OCI-LY7 (cell line): ENCODE measurements at regions of chr4 and their contacts with region 1.

Region 1: DNA sequence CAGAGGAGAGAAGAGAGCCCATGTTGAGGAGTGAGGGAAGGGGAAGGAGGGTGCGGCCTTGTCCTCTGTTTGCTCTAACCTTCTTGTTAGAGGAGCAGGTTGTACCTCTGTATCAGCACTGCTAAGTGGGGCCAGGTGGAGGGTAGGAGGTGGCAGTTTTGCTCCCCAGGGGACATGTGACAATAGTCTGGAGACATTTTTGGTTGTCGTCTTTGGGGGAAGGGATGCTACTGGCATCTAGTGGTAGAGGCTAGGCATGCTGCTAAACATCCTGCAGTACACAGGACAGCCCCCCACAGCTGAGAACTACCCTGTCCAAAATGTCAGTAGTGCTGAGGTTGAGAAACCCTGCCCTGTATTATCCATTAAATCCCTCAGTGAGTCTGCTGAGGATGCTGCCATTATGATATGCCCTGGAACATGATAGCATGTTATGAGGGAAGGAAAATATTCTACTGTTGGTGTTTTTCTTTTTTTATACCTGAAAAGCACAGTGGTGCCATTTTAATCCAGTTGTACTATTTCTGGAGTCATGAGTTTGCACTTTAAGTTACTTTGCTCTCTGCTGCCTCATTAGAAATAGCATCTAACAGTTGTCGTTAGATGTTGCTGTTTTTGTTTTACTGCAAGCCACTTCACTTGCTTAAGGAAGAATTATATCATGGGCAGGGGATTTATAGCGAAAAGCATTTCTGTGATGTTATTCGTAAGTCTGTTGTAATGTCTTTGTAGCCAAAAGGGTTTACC is 90.6 kb downstream of the LRP2BP start:
- DNase-seq: peak; percentile 94
- H3K4me3 ChIP-seq: no peak overlapping the region
- H3K27ac ChIP-seq: peak overlapping the region; percentile 72
- H3K4me1 ChIP-seq: peaks cover 66% of the 10 kb centered on the region
- CTCF ChIP-seq: peak; percentile 94

Region 2: DNA sequence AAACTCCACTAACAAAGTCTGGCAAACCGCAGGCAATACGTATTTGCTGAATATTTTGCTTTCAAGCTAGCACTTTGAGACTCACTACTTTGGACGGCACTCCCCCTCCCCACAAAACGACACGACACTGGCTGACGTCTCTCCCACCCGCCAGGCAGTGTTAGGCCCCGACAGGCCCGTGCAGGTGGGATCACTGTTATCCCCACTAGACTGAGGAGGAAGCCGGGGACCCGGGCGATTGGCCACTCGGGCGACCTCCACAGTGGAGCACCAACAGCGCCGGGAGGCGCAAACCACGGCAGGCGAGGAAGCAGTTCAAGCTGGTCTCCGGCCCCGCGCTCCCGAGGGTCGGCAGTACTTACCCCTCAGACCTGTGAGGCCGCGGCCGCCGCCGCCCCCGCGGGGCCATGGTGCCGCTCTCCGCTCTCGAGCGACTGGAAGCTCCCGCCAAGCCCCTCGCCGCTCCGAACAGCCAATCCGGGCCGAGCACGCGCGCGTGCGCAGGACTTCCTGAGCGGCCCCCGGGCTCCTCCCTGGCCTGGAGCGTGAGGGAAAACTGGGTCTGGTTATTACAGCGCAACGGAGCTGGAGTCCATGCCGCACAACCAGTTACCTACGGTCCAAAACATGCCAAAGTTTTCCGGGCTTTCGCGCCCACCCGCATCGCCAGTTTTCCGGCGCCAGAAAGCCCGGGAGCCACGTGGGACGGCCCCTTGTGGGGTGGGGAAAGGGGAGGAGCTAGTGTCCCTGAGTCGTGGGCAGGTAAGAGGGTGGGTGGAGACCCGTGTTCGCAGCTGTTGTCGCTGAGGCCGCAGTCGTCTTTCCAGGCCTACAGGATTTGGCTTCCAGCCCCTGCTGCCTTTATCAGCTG is 571.2 kb before region 1 on chr4 and contains the start of gene CENPU:
- CTCF ChIA-PET with region 1: no interaction called
- POLR2A ChIA-PET with region 1: no interaction called
- intact Hi-C with region 1: loop called (anchors 10 kb)
- DNase-seq: peak; percentile 99
- H3K4me3 ChIP-seq: peak within 1 kb of the TSS; percentile 94
- H3K27ac ChIP-seq: peak within 1 kb of the TSS; percentile 84
- H3K4me1 ChIP-seq: peaks cover 30% of the 10 kb centered on the region
- CTCF ChIP-seq: no peak
- total RNA-seq, gene CENPU: 83.9 and 85.1 TPM in 2 replicates

Region 3: DNA sequence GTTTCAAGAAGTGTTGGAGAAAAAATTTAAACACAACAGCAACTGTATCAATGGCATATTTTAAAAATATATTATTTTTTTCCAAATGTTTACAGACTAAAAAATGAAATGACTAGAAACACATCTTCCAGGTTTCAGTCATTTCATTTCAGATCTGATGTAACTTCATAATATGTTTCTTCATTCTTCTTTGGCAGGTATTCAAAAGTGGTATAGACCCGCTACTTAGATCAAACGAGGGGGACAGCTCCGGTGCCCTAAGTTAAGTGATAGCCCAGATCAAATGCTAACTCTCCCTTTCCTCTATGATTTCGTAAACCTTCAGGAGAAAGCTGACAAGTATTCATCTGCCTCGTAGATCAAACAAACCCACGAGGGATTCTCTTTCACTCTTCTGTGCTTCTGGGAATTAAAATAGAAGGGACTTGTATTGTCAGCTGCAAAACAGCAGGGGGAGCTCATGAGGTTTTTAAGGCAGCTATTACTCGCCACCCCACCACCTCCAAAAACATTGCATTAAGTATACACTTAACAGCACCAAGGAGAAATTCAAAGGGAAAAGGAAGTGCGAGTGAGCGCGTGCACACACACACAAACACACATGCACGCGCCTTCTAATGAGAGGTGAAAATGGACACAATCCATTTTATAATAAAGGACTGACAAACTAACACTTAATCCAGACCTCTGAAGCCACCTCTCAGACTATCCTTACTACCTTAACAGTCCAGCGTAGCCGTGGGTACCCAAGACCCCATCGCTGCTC is 265.4 kb before region 1 on chr4:
- CTCF ChIA-PET with region 1: no interaction called
- POLR2A ChIA-PET with region 1: no interaction called
- intact Hi-C with region 1: loop called (anchors 2 kb)
- DNase-seq: peak; percentile 80
- H3K4me3 ChIP-seq: peak overlapping the region; percentile 54
- H3K27ac ChIP-seq: no peak overlapping the region
- H3K4me1 ChIP-seq: peaks cover 6% of the 10 kb centered on the region
- CTCF ChIP-seq: peak; percentile 95

Region 4: DNA sequence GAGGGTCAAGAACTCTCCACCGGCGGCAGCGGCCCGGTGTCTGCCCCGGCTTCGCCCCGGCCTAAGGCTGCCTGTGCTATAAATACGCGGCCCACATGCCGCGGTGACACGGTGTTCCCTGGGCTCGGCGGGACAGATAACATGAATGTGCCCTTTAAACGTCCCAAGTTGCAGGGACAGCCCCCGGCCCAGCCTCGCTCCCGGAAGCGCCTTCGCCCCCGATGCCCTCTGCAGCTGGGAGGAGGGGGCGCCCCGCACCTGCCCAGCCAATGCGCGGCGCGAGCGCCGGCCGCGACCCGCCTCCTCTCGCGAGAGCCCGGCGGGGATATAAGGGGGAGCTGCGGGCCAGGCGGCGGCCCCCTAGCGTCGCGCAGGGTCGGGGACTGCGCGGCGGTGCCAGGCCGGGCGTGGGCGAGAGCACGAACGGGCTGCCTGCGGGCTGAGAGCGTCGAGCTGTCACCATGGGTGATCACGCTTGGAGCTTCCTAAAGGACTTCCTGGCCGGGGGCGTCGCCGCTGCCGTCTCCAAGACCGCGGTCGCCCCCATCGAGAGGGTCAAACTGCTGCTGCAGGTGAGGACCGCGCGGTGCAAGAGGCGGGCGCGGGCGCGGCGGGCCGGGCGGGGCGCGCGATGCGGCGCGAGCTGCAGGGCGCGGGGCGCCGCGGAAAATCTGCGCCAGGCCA is 162.1 kb before region 1 on chr4 and contains the start of gene SLC25A4:
- CTCF ChIA-PET with region 1: interaction called, 3 read pairs
- POLR2A ChIA-PET with region 1: interaction called, 10 read pairs
- intact Hi-C with region 1: loop called (anchors 1 kb)
- DNase-seq: peak; percentile 93
- H3K4me3 ChIP-seq: peak within 1 kb of the TSS; percentile 91
- H3K27ac ChIP-seq: peak within 1 kb of the TSS; percentile 30
- H3K4me1 ChIP-seq: peaks cover 19% of the 10 kb centered on the region
- CTCF ChIP-seq: peak; percentile 63
- total RNA-seq, gene SLC25A4: 24.1 and 29.6 TPM in 2 replicates

Region 5: GRCh38 chr4:185183619-185184281 is 121.4 kb before region 1 on chr4:
- CTCF ChIA-PET with region 1: no interaction called
- POLR2A ChIA-PET with region 1: no interaction called
- intact Hi-C with region 1: no loop called
- DNase-seq: peak; percentile 85
- H3K4me3 ChIP-seq: no peak overlapping the region
- H3K27ac ChIP-seq: no peak overlapping the region
- H3K4me1 ChIP-seq: peaks cover 11% of the 10 kb centered on the region
- CTCF ChIP-seq: peak; percentile 98

Region 6: GRCh38 chr4:185209031-185209851 is 95.9 kb before region 1 on chr4 and contains the start of gene SNX25:
- CTCF ChIA-PET with region 1: interaction called, 4 read pairs
- POLR2A ChIA-PET with region 1: interaction called, 5 read pairs
- intact Hi-C with region 1: loop called (anchors 1 kb)
- DNase-seq: peak; percentile 91
- H3K4me3 ChIP-seq: peak within 1 kb of the TSS; percentile 81
- H3K27ac ChIP-seq: peak within 1 kb of the TSS; percentile 80
- H3K4me1 ChIP-seq: peaks cover 57% of the 10 kb centered on the region
- CTCF ChIP-seq: peak; percentile 33
- total RNA-seq, gene SNX25: 33.7 and 35.5 TPM in 2 replicates

Region 7: DNA sequence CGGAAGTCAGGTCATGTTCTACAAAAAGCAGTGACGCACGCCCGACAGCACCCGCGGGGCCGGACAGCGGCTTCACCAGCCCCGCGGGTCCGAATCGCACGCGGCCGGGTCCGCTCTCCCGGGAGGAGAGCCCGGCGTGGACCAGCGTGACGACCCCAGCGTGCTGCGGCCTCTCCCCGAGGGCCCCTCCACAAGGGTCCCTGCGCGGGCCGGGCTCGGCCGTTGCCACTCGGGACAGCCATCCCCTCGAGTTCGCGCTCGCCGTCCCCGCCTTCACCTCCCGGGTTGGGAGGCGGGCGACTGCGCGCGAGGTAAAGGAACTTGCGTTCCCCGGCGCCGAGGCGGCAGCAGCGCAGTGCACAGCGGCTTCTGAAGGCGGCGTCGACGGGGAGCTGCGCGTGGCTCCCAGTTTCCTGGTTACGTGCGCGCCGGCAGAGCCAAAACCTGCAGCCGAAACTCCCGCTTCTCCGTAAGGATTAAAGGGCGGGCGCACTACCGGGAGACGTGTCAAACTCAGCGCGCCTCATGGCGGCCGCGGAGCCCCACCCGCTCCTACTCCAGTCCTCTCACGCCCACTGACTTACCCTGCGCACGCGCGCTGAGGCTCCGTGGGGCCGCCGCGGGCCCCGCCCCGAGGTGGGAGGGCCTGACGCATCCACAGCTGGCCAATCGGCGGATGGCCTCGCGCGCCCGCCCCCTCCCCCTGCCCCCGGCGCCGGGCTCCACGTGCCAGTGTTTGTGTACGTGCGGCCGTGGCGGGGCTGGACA is 91.0 kb after region 1 on chr4:
- CTCF ChIA-PET with region 1: no interaction called
- POLR2A ChIA-PET with region 1: no interaction called
- intact Hi-C with region 1: loop called (anchors 5 kb)
- DNase-seq: peak; percentile 97
- H3K4me3 ChIP-seq: peak overlapping the region; percentile 75
- H3K27ac ChIP-seq: peak overlapping the region; percentile 70
- H3K4me1 ChIP-seq: peaks cover 58% of the 10 kb centered on the region
- CTCF ChIP-seq: no peak

Region 8: DNA sequence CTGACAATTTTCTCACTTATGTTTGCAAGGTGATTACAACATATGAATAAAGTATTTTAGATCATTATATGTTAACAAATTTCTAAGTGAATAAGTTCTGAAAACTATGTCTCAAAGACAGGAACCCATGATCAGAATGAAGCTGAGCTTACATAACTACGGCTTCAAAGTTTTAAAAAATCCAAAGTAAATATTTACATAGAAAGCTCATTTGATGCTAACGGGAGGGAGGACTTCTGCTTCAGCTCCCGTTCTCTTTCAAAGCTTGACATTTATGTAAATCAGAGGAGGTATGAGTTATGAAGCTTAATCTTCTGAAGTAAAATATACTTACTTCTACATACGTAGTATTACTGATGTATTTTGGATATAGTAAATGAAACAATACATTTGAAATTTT is 303.1 kb after region 1 on chr4:
- CTCF ChIA-PET with region 1: no interaction called
- POLR2A ChIA-PET with region 1: no interaction called
- intact Hi-C with region 1: no loop called
- DNase-seq: no peak
- H3K4me3 ChIP-seq: no peak overlapping the region
- H3K27ac ChIP-seq: no peak overlapping the region
- H3K4me1 ChIP-seq: no peaks in the 10 kb centered on the region
- CTCF ChIP-seq: no peak